Activated CD8-positive, alpha-beta memory T cell treated with anti-CD3 and anti-CD28 coated beads, Interleukin-2, amount 10 ng/mL, durations not matched to agents 7 days and 5 days (primary cell): ENCODE measurements at regions of chr16 and their contacts with region 1.

Region 1: GRCh38 chr16:74650966-74651567 is 15.6 kb downstream of the RFWD3 start:
- DNase-seq: no peak
- ATAC-seq: no peak
- H3K4me3 Mint-ChIP-seq: no peak overlapping the region
- H3K27ac Mint-ChIP-seq: no peak overlapping the region
- H3K4me1 Mint-ChIP-seq: peaks cover 30% of the 10 kb centered on the region
- H3K27me3 Mint-ChIP-seq: no peaks in the 10 kb centered on the region

Region 2: DNA sequence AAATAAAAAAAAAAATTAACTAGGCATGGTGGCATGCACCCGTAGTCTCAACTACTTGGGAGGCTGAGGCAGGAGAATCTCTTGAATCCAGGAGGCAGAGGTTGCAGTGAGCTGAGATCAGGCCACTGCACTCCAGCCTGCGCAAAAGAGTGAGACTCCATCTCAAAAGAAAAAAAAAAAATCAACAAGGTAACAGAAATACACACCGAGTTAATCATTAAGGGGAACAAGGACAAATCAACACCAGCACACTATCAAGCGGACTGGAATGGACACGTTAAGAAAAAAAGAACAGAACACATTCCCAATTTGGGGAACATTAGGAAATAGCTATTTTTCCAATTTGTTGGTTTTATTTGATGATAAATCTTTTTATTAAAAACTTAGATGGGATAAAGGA is 15.8 kb before region 1 on chr16:
- CTCF ChIA-PET with region 1: interaction called, 16 read pairs
- DNase-seq: no peak
- ATAC-seq: no peak
- H3K4me3 Mint-ChIP-seq: no peak overlapping the region
- H3K27ac Mint-ChIP-seq: no peak overlapping the region
- H3K4me1 Mint-ChIP-seq: peaks cover 3% of the 10 kb centered on the region
- H3K27me3 Mint-ChIP-seq: no peaks in the 10 kb centered on the region

Region 3: GRCh38 chr16:74666425-74667254 is 15.6 kb after region 1 on chr16 and contains the start of gene RFWD3:
- CTCF ChIA-PET with region 1: interaction called, 11 read pairs
- DNase-seq: peak; percentile 99
- ATAC-seq: peak; percentile 99
- H3K4me3 Mint-ChIP-seq: peak within 1 kb of the TSS; percentile 80
- H3K27ac Mint-ChIP-seq: peak within 1 kb of the TSS; percentile 97
- H3K4me1 Mint-ChIP-seq: peaks cover 49% of the 10 kb centered on the region
- H3K27me3 Mint-ChIP-seq: no peaks in the 10 kb centered on the region
- total RNA-seq, gene RFWD3: 121 to 162 TPM

Region 4: DNA sequence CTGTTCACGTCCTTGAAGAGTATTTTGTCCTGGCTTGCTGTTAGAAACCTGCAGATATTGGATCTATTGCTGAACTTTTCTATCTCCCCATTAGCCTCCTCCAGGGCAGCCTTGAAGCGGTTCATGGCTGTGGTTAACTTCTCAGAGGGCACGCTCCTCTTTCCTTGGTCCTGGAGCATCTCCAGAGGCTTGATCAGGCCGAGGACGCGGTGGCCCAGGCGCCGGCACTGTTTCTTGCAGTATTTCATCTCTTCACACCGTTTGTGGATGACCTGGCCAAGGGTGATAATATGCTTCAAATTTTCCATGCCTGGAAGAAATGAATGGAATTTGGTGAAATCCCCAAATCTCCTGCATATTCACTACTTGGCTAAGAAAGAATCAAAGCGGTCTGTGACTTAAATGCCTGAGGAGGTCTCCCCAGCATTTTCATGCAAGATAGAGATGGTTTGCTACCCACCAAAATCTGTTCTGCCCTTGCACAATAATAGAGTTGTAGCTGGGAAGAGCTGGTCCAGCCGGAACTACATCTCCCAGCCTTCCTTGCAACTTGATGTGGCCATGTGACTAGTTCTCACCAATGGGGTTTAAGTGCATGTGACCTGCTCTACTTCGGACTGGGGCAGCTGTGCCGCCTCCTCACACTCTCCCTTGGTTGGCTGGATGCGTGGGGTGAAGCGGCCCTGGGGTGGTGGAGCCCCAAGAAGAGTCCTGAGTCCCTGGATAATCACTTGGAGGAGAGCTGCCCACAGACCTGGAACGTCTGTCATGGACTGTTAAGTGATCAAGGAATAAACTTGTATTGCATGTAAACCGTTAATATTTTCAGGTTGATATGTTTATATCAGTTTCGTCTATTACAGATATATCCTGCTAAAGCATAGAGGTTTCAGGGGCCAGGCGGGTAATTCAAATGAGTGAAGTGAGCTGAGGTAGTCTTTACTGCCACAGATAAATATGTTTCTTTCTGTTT is 44.7 kb after region 1 on chr16:
- CTCF ChIA-PET with region 1: no interaction called
- DNase-seq: peak; percentile 84
- ATAC-seq: peak; percentile 80
- H3K4me3 Mint-ChIP-seq: peak overlapping the region; percentile 67
- H3K27ac Mint-ChIP-seq: peak overlapping the region; percentile 80
- H3K4me1 Mint-ChIP-seq: peaks cover 39% of the 10 kb centered on the region
- H3K27me3 Mint-ChIP-seq: no peaks in the 10 kb centered on the region

Region 5: GRCh38 chr16:74896389-74897240 is 245.5 kb after region 1 on chr16:
- CTCF ChIA-PET with region 1: no interaction called
- DNase-seq: no peak
- ATAC-seq: no peak
- H3K4me3 Mint-ChIP-seq: no peak overlapping the region
- H3K27ac Mint-ChIP-seq: no peak overlapping the region
- H3K4me1 Mint-ChIP-seq: no peaks in the 10 kb centered on the region
- H3K27me3 Mint-ChIP-seq: no peaks in the 10 kb centered on the region